OCI-LY7 (cell line): ENCODE measurements at regions of chr7 and their contacts with region 1.

Region 1: GRCh38 chr7:100208911-100209408 is 10.8 kb upstream of the PVRIG start:
- DNase-seq: no peak
- H3K4me3 ChIP-seq: no peak overlapping the region
- H3K27ac ChIP-seq: peak overlapping the region; percentile 9
- H3K4me1 ChIP-seq: peaks cover 64% of the 10 kb centered on the region
- CTCF ChIP-seq: no peak

Region 2: DNA sequence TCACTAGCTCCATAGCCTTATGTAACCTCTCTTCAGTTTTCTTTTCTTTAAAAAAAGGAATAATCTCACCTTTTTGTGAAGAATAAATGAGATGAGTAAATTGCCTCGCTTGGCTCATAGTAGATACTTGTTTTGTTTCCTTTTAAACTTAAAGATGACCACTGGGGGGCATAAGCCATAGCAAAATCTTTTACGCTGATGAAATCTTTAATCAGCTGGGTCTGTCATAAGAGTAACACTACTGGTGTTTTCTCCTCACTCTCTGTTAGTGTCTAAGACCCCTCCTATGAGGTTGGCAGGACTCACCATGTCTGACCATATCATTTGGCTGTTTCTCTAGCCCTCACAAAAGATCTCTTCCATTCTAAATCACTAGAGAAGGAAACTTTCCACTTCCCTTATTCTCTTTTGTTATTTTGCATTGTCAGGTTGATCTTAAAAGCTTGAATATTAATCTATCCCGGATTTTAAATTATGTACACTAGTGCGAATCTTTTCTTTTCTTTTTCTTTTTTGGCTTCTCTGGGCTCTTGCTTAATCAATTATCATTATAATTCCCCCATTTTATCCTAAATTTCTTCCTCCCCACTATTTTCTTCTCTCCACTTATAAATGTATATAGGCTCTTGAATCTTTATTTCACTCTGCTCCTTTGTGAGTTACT is 18.8 kb before region 1 on chr7:
- CTCF ChIA-PET with region 1: no interaction called
- POLR2A ChIA-PET with region 1: interaction called, 13 read pairs
- intact Hi-C with region 1: no loop called
- DNase-seq: peak; percentile 90
- H3K4me3 ChIP-seq: peak overlapping the region; percentile 48
- H3K27ac ChIP-seq: peak overlapping the region; percentile 95
- H3K4me1 ChIP-seq: peaks cover 71% of the 10 kb centered on the region
- CTCF ChIP-seq: peak; percentile 84